Stomach (tissue), 19 donors: ENCODE measurements at regions of chr19 and their contacts with region 1.

Region 1: GRCh38 chr19:52237771-52238400 is 31.5 kb upstream of the ZNF766 start:
- DNase-seq: peak; percentile 59 to 83
- H3K4me3 ChIP-seq: no peak overlapping the region
- H3K27ac ChIP-seq: no peak overlapping the region
- H3K4me1 ChIP-seq: peaks cover 0 to 8% (median 2%) of the 10 kb centered on the region in 4 donors
- H3K27me3 ChIP-seq: no peaks in the 10 kb centered on the region
- CTCF ChIP-seq: peak in 5 of 7 experiments; percentile 75 to 94 (median 81)
- EP300 ChIP-seq: no peak
- POLR2A ChIP-seq: no peak

Region 2: GRCh38 chr19:52139252-52140031 is 98.4 kb before region 1 on chr19 and contains the start of gene ZNF616:
- intact Hi-C with region 1: loop called (anchors 5 kb)
- DNase-seq: peak; percentile 98 to 99
- H3K4me3 ChIP-seq: peak within 1 kb of the TSS; percentile 69 to 92 (median 82)
- H3K27ac ChIP-seq: peak within 1 kb of the TSS; percentile 86 to 97 (median 93)
- H3K4me1 ChIP-seq: peaks cover 19 to 28% (median 23%) of the 10 kb centered on the region in 4 donors
- H3K27me3 ChIP-seq: no peaks in the 10 kb centered on the region
- CTCF ChIP-seq: peak in 5 of 7 experiments; percentile 57 to 83 (median 76)
- EP300 ChIP-seq: no peak
- POLR2A ChIP-seq: no peak
- total RNA-seq, gene ZNF616: 0.29 to 23.3 (median 7.2) TPM